CD8-positive, alpha-beta T cell (primary cell): ENCODE measurements at regions of chr13 and their contacts with region 1.

Region 1: DNA sequence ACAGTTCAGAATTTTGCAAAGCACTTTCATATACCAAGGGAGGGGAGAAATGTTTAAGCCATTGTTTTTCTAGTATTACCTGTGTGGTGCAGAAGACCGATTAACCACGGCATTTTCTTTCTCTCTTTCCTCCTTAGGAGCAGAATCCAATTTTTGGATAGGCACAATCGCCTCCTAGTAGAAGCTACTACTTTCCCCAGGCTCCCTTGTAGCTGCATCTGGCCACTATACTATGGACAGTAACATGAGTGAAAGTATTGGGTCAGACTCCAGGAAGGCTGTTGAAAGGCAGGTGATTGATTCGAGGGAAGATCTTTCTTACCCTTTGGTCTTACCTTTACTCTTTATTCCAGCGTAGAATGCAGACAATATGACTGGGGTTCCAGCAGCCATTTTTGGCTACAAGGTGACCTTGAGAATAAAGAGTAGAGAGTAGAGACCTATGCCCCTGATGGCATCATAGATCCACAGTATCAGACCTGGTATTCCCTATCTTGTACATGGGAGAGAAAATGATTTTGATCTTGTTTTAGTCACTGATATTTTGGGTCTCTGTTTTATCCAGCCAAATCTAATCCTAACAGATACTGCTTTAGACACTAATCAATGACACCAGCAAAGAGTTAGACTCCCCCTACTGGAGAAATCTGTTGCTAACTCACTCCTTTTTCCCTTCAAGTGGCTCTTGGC is 77.0 kb downstream of the LRRC63 start:
- DNase-seq: peak in 2 of 9 experiments; percentile 70 to 79
- ATAC-seq: peak; percentile 96
- H3K4me3 ChIP-seq: no peak overlapping the region
- H3K4me3 Mint-ChIP-seq: no peak overlapping the region
- H3K27ac ChIP-seq: no peak overlapping the region
- H3K27ac Mint-ChIP-seq: no peak overlapping the region
- H3K4me1 ChIP-seq: peaks cover 7% of the 10 kb centered on the region
- H3K4me1 Mint-ChIP-seq: peaks cover 19% of the 10 kb centered on the region
- H3K27me3 ChIP-seq: no peaks in the 10 kb centered on the region
- H3K27me3 Mint-ChIP-seq: no peaks in the 10 kb centered on the region
- CTCF ChIP-seq: peak; percentile 89

Region 2: DNA sequence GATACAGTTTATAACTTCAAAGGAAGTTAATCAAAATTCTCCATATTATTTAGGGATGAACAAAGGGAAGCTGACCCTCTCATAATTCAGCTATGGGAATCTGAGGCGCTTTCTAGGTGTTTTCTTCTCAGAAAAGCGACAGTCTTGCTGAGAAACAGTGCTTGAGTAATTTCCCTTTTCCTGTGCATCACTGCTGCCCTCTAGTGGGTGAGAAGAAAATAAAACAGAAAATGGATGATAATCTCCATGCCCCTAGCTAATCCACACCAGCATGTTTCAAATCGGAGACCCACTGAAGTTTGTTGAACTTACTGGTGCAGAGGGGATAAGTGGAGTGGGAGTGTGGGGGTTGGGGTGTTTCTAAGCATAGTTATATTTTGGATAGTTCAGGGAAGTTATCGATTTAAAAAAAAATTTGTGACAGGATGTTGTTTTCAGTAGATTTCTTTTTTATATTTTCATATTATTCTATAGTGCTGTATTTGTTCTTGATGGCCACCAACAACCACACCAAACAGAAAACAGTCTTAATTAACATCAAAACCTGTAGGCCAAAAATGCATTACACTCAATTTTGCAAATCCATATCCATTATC is 128.1 kb before region 1 on chr13:
- CTCF ChIA-PET with region 1: interaction called, 50 read pairs
- POLR2A ChIA-PET with region 1: interaction called, 3 read pairs
- intact Hi-C with region 1: loop called (anchors 1 kb)
- DNase-seq: peak in 3 of 9 experiments; percentile 41 to 92 (median 85)
- ATAC-seq: peak; percentile 76
- H3K4me3 ChIP-seq: no peak overlapping the region
- H3K4me3 Mint-ChIP-seq: peak overlapping the region; percentile 73
- H3K27ac ChIP-seq: peak overlapping the region in 1 of 2 experiments; percentile 77
- H3K27ac Mint-ChIP-seq: peak overlapping the region; percentile 94
- H3K4me1 ChIP-seq: peaks cover 45% of the 10 kb centered on the region
- H3K4me1 Mint-ChIP-seq: peaks cover 55% of the 10 kb centered on the region
- H3K27me3 ChIP-seq: no peaks in the 10 kb centered on the region
- H3K27me3 Mint-ChIP-seq: no peaks in the 10 kb centered on the region
- CTCF ChIP-seq: peak; percentile 79

Region 3: DNA sequence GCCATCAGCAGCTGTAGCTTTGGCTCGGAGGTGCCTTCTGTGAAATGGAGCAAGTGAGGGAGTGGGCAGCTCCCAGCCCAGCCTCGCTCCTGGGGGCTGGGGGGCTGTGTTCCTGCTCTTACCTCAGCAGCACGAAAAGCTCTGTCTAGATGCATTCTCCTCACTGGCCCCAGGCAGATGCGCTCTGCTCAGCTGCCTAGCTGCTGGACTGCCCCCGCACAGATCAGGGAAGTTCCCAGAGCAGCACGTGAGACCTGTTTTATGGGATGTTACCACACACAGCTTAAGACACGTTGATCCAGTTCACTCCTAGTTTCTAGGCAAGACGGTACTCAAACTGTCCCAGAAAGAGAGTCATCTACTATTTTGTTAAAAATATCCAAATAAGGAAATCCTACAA is 120.4 kb before region 1 on chr13:
- CTCF ChIA-PET with region 1: interaction called, 22 read pairs
- POLR2A ChIA-PET with region 1: no interaction called
- intact Hi-C with region 1: no loop called
- DNase-seq: peak in 4 of 9 experiments; percentile 29 to 86 (median 59)
- ATAC-seq: peak; percentile 15
- H3K4me3 ChIP-seq: peak overlapping the region; percentile 9 to 15
- H3K4me3 Mint-ChIP-seq: peak overlapping the region; percentile 68
- H3K27ac ChIP-seq: peak overlapping the region; percentile 14 to 83
- H3K27ac Mint-ChIP-seq: peak overlapping the region; percentile 89
- H3K4me1 ChIP-seq: peaks cover 93% of the 10 kb centered on the region
- H3K4me1 Mint-ChIP-seq: peaks cover 90% of the 10 kb centered on the region
- H3K27me3 ChIP-seq: no peaks in the 10 kb centered on the region
- H3K27me3 Mint-ChIP-seq: no peaks in the 10 kb centered on the region
- CTCF ChIP-seq: no peak

Region 4: GRCh38 chr13:46176756-46177155 is 112.0 kb before region 1 on chr13:
- CTCF ChIA-PET with region 1: interaction called, 22 read pairs
- POLR2A ChIA-PET with region 1: no interaction called
- intact Hi-C with region 1: no loop called
- DNase-seq: peak in 1 of 9 experiments; percentile 62
- ATAC-seq: no peak
- H3K4me3 ChIP-seq: peak overlapping the region; percentile 40
- H3K4me3 Mint-ChIP-seq: peak overlapping the region; percentile 79
- H3K27ac ChIP-seq: peak overlapping the region; percentile 51 to 94
- H3K27ac Mint-ChIP-seq: peak overlapping the region; percentile 94
- H3K4me1 ChIP-seq: peaks cover 66% of the 10 kb centered on the region
- H3K4me1 Mint-ChIP-seq: peaks cover 66% of the 10 kb centered on the region
- H3K27me3 ChIP-seq: no peaks in the 10 kb centered on the region
- H3K27me3 Mint-ChIP-seq: no peaks in the 10 kb centered on the region
- CTCF ChIP-seq: no peak

Region 5: DNA sequence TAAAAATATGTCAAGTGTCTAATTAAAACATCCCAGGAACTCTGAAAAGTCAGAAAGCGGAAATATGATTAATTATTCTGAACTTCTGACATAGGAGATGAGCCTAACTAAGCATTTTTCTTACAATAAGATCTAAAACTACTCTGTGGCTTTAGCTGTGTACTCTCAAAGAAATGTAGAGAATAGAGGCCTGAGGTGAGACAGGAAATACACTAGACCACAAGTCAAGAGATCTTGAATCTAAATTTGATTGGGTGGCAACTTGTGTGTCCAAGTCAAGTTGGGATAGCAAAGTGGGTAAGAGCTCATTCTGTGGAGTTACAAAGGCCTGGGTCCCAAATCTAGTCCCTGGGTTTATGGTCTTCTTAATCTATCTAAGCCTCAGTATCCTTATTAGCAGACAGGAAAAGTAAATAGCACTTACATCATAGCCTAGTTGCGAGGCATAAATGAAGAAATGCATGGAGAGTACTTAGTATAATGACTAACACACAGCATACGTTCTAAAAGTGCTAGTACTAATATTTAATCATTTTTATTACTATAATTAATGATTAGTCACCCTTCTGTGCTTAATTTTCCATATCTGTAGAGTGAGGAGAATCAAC is 86.4 kb before region 1 on chr13:
- CTCF ChIA-PET with region 1: interaction called, 10 read pairs
- POLR2A ChIA-PET with region 1: no interaction called
- intact Hi-C with region 1: no loop called
- DNase-seq: peak in 1 of 9 experiments; percentile 61
- ATAC-seq: peak; percentile 73
- H3K4me3 ChIP-seq: no peak overlapping the region
- H3K4me3 Mint-ChIP-seq: peak overlapping the region; percentile 35
- H3K27ac ChIP-seq: peak overlapping the region in 1 of 2 experiments; percentile 49
- H3K27ac Mint-ChIP-seq: peak overlapping the region; percentile 83
- H3K4me1 ChIP-seq: peaks cover 36% of the 10 kb centered on the region
- H3K4me1 Mint-ChIP-seq: peaks cover 48% of the 10 kb centered on the region
- H3K27me3 ChIP-seq: no peaks in the 10 kb centered on the region
- H3K27me3 Mint-ChIP-seq: no peaks in the 10 kb centered on the region
- CTCF ChIP-seq: no peak

Region 6: DNA sequence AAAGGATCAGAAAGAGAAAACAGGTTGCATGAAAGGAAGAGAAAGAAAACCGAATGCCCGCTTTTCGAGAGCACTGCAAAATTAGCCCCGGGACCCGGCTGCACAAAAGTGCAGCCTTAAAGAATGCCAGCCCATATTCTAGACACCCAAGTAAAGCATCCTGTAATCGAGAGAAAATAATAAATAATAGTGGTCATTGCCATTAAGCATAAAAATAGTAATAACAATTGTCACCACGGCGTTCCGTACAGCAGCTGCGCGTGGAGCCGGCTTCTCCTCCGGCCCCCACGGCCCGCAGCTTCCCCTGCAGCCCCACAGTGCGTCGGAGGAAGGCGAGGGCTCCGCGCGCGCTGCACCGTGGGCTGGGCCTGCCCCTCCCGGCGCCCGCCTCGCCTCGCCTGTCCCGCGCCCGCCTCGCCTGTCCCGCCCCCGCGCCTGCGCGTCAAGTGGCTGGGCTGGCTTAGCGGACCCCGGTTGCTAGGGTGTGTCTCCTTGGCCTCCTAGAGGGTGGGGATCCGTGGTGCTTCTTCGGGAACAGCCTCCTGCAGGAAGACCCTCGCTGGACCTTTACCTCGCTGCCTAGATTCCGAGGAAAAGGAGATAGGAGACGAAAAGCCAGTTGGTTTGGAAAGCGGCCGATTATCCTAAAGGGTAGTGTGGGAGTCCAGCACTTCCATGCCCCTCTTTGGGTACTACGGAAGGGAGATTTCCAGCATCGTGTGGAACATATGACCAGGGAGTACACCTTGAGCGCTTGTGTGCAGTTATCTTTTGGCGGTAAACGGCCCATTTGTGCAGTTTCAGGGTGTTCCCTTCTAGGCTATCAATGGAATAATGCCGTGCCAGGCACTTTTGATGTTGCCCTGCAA is 77.0 kb before region 1 on chr13 and contains the start of gene LRRC63:
- CTCF ChIA-PET with region 1: no interaction called
- POLR2A ChIA-PET with region 1: no interaction called
- intact Hi-C with region 1: loop called in 1 of 2 experiments (anchors 5 kb)
- DNase-seq: peak; percentile 58 to 91 (median 84)
- ATAC-seq: peak; percentile 92
- H3K4me3 ChIP-seq: peak within 1 kb of the TSS; percentile 69 to 73
- H3K4me3 Mint-ChIP-seq: peak within 1 kb of the TSS; percentile 86
- H3K27ac ChIP-seq: peak within 1 kb of the TSS; percentile 74 to 90
- H3K27ac Mint-ChIP-seq: peak within 1 kb of the TSS; percentile 93
- H3K4me1 ChIP-seq: peaks cover 13% of the 10 kb centered on the region
- H3K4me1 Mint-ChIP-seq: peaks cover 19% of the 10 kb centered on the region
- H3K27me3 ChIP-seq: no peaks in the 10 kb centered on the region
- H3K27me3 Mint-ChIP-seq: no peaks in the 10 kb centered on the region
- CTCF ChIP-seq: no peak
- total RNA-seq, gene LRRC63: 0.22 to 0.31 TPM

Region 7: GRCh38 chr13:46278474-46278873 is 10.2 kb before region 1 on chr13:
- CTCF ChIA-PET with region 1: interaction called, 13 read pairs
- POLR2A ChIA-PET with region 1: interaction called, 5 read pairs
- intact Hi-C with region 1: no loop called
- DNase-seq: no peak
- ATAC-seq: no peak
- H3K4me3 ChIP-seq: no peak overlapping the region
- H3K4me3 Mint-ChIP-seq: no peak overlapping the region
- H3K27ac ChIP-seq: no peak overlapping the region
- H3K27ac Mint-ChIP-seq: peak overlapping the region; percentile 14
- H3K4me1 ChIP-seq: no peaks in the 10 kb centered on the region
- H3K4me1 Mint-ChIP-seq: peaks cover 5% of the 10 kb centered on the region
- H3K27me3 ChIP-seq: no peaks in the 10 kb centered on the region
- H3K27me3 Mint-ChIP-seq: no peaks in the 10 kb centered on the region
- CTCF ChIP-seq: no peak